Natural killer cell (primary cell): ENCODE measurements at regions of chr1 and their contacts with region 1.

Region 1: DNA sequence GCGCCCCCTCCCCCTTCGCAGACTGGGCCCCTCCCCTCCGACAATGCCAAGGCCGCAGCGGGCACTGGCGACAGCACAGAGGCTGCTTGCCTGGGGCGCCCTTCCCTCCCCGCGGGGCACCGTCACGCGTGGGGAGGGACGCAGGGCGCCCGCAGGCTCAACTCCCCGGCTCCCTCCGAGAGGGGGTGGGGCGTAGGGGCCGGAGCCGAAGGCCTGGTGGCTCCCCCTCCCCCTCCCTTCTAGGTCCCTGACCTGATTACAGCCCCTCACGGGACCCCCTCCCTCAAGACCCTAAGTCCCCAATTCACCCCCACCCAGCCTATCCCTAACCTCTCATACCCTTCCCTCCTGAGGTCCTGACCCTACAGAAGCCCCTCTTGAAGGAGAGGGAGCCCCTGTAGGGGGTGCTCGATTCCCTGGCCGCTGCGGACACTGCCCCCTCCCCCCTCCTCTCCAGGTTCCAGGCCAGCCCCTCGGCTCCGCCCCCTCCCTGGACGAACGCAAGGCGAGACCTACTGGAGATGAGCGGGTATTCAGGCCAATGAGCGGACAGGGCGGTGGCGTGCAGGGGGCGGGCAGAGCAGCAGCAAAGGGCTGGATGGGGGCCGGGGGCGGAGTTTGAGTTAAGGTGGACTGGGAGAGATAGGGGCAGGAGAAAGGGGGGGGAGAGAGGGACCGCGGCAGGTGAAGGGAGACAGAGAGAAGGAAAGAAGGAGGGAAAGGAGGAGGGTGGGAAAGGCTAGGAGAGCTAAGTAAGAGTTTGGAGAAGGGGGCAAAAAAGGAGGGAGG is 733 bp upstream of the ZBTB7B start:
- DNase-seq: peak; percentile 97 to 98
- ATAC-seq: peak; percentile 80 to 93 (median 89)
- H3K4me3 ChIP-seq: peak overlapping the region; percentile 75
- H3K4me3 Mint-ChIP-seq: peak overlapping the region; percentile 95
- H3K27ac ChIP-seq: peak overlapping the region; percentile 94
- H3K27ac Mint-ChIP-seq: peak overlapping the region; percentile 82 to 92
- H3K4me1 ChIP-seq: peaks cover 78% of the 10 kb centered on the region
- H3K4me1 Mint-ChIP-seq: peaks cover 30 to 66% of the 10 kb centered on the region in 2 donors
- H3K27me3 ChIP-seq: no peaks in the 10 kb centered on the region
- H3K27me3 Mint-ChIP-seq: no peaks in the 10 kb centered on the region
- CTCF ChIP-seq: no peak

Region 2: DNA sequence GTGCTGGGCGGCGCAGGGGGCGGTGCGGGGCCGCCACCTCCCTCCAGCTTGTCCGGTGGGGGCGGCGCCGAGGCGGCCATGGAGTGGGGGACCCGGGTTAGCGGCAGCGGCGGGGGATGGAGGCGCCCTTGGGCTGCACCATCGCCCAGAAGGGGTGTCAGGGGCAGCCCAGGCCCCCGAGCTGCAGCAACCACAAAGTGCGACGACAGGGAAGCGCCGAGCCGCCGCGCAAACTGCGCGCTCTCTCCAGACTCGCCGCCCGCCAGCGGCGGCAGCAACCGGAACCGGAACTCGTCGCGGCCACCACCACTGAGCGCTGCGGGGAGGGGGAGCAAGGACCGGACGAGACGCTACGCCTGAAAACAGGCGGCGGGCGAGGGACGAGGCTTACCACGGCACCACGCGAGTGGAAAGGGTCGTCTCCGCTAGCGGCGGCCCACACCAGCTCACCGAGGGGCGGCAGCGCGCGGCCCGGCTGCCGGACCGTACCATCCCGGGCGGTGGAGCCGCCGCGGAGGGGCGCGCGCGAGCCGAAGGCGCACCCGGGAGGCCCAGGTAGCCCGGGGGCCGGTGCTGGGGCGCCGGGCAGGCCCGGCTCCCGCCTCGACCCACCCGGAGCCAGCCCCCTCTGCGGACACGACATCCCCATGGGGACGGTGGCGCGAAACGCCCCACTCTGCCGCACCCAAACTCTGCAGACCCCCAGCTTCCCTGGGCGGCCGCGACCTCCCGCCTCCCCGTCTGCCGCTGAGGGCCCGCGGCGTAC is 40.2 kb before region 1 on chr1 and contains the start of gene PYGO2:
- intact Hi-C with region 1: loop called (anchors 2 kb)
- DNase-seq: peak; percentile 79 to 89
- ATAC-seq: peak; percentile 82 to 90 (median 84)
- H3K4me3 ChIP-seq: peak within 1 kb of the TSS; percentile 65
- H3K4me3 Mint-ChIP-seq: peak within 1 kb of the TSS; percentile 91
- H3K27ac ChIP-seq: peak within 1 kb of the TSS; percentile 93
- H3K27ac Mint-ChIP-seq: peak within 1 kb of the TSS; percentile 88
- H3K4me1 ChIP-seq: peaks cover 22% of the 10 kb centered on the region
- H3K4me1 Mint-ChIP-seq: peaks cover 18 to 29% of the 10 kb centered on the region in 2 donors
- H3K27me3 ChIP-seq: no peaks in the 10 kb centered on the region
- H3K27me3 Mint-ChIP-seq: no peaks in the 10 kb centered on the region
- CTCF ChIP-seq: peak; percentile 76
- total RNA-seq, gene PYGO2: 21.6 to 32.1 (median 27.5) TPM

Region 3: GRCh38 chr1:154974063-154974807 is 27.6 kb before region 1 on chr1 and contains the start of gene CKS1B:
- intact Hi-C with region 1: loop called (anchors 1 kb)
- DNase-seq: peak; percentile 96 to 99
- ATAC-seq: peak; percentile 78 to 94 (median 85)
- H3K4me3 ChIP-seq: peak within 1 kb of the TSS; percentile 91
- H3K4me3 Mint-ChIP-seq: no peak within 1 kb of the TSS
- H3K27ac ChIP-seq: peak within 1 kb of the TSS; percentile 99
- H3K27ac Mint-ChIP-seq: no peak within 1 kb of the TSS
- H3K4me1 ChIP-seq: peaks cover 43% of the 10 kb centered on the region
- H3K4me1 Mint-ChIP-seq: peaks cover 15 to 26% of the 10 kb centered on the region in 2 donors
- H3K27me3 ChIP-seq: no peaks in the 10 kb centered on the region
- H3K27me3 Mint-ChIP-seq: no peaks in the 10 kb centered on the region
- CTCF ChIP-seq: no peak
- total RNA-seq, gene CKS1B: 8.5 to 13.0 (median 12.9) TPM

Region 4: DNA sequence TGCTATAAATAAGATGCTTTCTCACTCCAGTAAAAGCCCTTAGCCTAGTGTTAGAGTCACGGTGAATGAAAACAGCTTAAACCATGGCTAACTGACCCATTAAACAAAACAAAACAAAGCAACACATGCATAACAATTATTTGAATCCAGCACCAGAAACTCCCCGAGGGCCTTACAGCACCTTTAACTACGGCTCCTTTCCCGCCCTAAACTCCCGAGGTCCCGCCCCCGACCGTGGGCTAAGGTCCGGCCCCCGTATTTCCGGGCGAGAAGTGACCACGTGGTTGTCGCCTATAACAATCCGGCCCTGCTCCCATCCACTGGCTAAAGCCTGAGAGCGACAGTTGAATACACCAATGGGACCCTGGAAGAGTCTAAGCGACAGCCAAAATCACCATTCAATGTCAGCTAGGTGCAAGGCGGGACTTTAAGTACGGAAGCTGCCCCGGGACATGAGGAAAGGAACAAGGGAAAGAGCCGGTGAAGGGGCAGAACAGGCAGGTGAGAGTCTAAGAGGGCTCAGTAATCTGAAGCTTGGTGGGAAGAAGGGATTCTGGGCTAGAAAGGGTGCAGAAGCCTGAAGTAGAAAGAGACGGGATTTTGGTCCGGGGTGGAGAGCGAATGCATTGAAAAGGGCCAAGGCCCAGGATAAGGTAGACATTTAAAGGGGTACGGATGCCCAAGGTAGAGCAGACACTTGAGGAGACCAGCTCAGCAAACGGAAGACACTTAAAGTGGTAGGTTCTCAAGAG is 18.8 kb before region 1 on chr1 and contains the start of gene FLAD1:
- intact Hi-C with region 1: loop called (anchors 1 kb)
- DNase-seq: peak; percentile 85 to 99
- ATAC-seq: peak; percentile 98 to 100 (median 99)
- H3K4me3 ChIP-seq: peak within 1 kb of the TSS; percentile 59
- H3K4me3 Mint-ChIP-seq: no peak within 1 kb of the TSS
- H3K27ac ChIP-seq: peak within 1 kb of the TSS; percentile 51
- H3K27ac Mint-ChIP-seq: no peak within 1 kb of the TSS
- H3K4me1 ChIP-seq: peaks cover 16% of the 10 kb centered on the region
- H3K4me1 Mint-ChIP-seq: peaks cover 0 to 6% of the 10 kb centered on the region in 2 donors
- H3K27me3 ChIP-seq: no peaks in the 10 kb centered on the region
- H3K27me3 Mint-ChIP-seq: no peaks in the 10 kb centered on the region
- CTCF ChIP-seq: no peak
- total RNA-seq, gene FLAD1: 32.1 to 47.6 (median 38.7) TPM